Naive thymus-derived CD4-positive, alpha-beta T cell (primary cell): ENCODE measurements at regions of chr19 and their contacts with region 1.

Region 1: GRCh38 chr19:44653977-44654774 is 10.5 kb downstream of the PVR start:
- DNase-seq: peak; percentile 39 to 72 (median 58)
- ATAC-seq: peak; percentile 98
- H3K4me3 ChIP-seq: no peak overlapping the region
- H3K4me3 Mint-ChIP-seq: no peak overlapping the region
- H3K27ac ChIP-seq: no peak overlapping the region
- H3K27ac Mint-ChIP-seq: peak overlapping the region in 1 of 9 donors; percentile 27
- H3K4me1 ChIP-seq: peaks cover 0 to 4% of the 10 kb centered on the region in 2 donors
- H3K4me1 Mint-ChIP-seq: peaks cover 6 to 13% (median 10%) of the 10 kb centered on the region in 7 donors
- H3K27me3 ChIP-seq: no peaks in the 10 kb centered on the region
- H3K27me3 Mint-ChIP-seq: no peaks in the 10 kb centered on the region

Region 2: GRCh38 chr19:44576843-44577565 is 77.2 kb before region 1 on chr19:
- CTCF ChIA-PET with region 1: interaction called, 13 read pairs
- POLR2A ChIA-PET with region 1: no interaction called
- intact Hi-C with region 1: loop called in 1 of 2 experiments (anchors 1 kb)
- DNase-seq: peak in 3 of 9 donors; percentile 9 to 11 (median 10)
- ATAC-seq: peak; percentile 44
- H3K4me3 ChIP-seq: no peak overlapping the region
- H3K4me3 Mint-ChIP-seq: no peak overlapping the region
- H3K27ac ChIP-seq: no peak overlapping the region
- H3K27ac Mint-ChIP-seq: no peak overlapping the region
- H3K4me1 ChIP-seq: no peaks in the 10 kb centered on the region
- H3K4me1 Mint-ChIP-seq: no peaks in the 10 kb centered on the region
- H3K27me3 ChIP-seq: no peaks in the 10 kb centered on the region
- H3K27me3 Mint-ChIP-seq: peaks cover 0 to 5% (median 0%) of the 10 kb centered on the region in 5 donors

Region 3: GRCh38 chr19:44607049-44607448 is 47.1 kb before region 1 on chr19:
- CTCF ChIA-PET with region 1: no interaction called
- POLR2A ChIA-PET with region 1: no interaction called
- intact Hi-C with region 1: loop called in 1 of 2 experiments (anchors 5 kb)
- DNase-seq: peak in 4 of 9 donors; percentile 4 to 23 (median 19)
- ATAC-seq: peak; percentile 56
- H3K4me3 ChIP-seq: no peak overlapping the region
- H3K4me3 Mint-ChIP-seq: peak overlapping the region in 9 of 10 donors; percentile 39 to 86 (median 75)
- H3K27ac ChIP-seq: no peak overlapping the region
- H3K27ac Mint-ChIP-seq: peak overlapping the region in 8 of 9 donors; percentile 4 to 85 (median 62)
- H3K4me1 ChIP-seq: peaks cover 0 to 10% of the 10 kb centered on the region in 2 donors
- H3K4me1 Mint-ChIP-seq: peaks cover 0 to 31% (median 22%) of the 10 kb centered on the region in 7 donors
- H3K27me3 ChIP-seq: no peaks in the 10 kb centered on the region
- H3K27me3 Mint-ChIP-seq: peaks cover 0 to 5% (median 0%) of the 10 kb centered on the region in 5 donors

Region 4: GRCh38 chr19:44689056-44689895 is 35.1 kb after region 1 on chr19:
- CTCF ChIA-PET with region 1: no interaction called
- POLR2A ChIA-PET with region 1: no interaction called
- intact Hi-C with region 1: loop called in 1 of 2 experiments (anchors 5 kb)
- DNase-seq: peak; percentile 42 to 79 (median 69)
- ATAC-seq: peak; percentile 63
- H3K4me3 ChIP-seq: no peak overlapping the region
- H3K4me3 Mint-ChIP-seq: peak overlapping the region in 1 of 10 donors; percentile 20
- H3K27ac ChIP-seq: no peak overlapping the region
- H3K27ac Mint-ChIP-seq: peak overlapping the region in 4 of 9 donors; percentile 45 to 74 (median 62)
- H3K4me1 ChIP-seq: peaks cover 0 to 21% of the 10 kb centered on the region in 2 donors
- H3K4me1 Mint-ChIP-seq: peaks cover 25 to 43% (median 32%) of the 10 kb centered on the region in 7 donors
- H3K27me3 ChIP-seq: no peaks in the 10 kb centered on the region
- H3K27me3 Mint-ChIP-seq: peaks cover 5 to 19% (median 9%) of the 10 kb centered on the region in 5 donors

Region 5: GRCh38 chr19:44770550-44771257 is 116.5 kb after region 1 on chr19:
- CTCF ChIA-PET with region 1: interaction called, 6 read pairs
- POLR2A ChIA-PET with region 1: no interaction called
- intact Hi-C with region 1: loop called (anchors 1 kb)
- DNase-seq: peak; percentile 88 to 96 (median 94)
- ATAC-seq: peak; percentile 100
- H3K4me3 ChIP-seq: no peak overlapping the region
- H3K4me3 Mint-ChIP-seq: peak overlapping the region; percentile 45 to 83 (median 72)
- H3K27ac ChIP-seq: no peak overlapping the region
- H3K27ac Mint-ChIP-seq: peak overlapping the region; percentile 69 to 95 (median 86)
- H3K4me1 ChIP-seq: peaks cover 5 to 9% of the 10 kb centered on the region in 2 donors
- H3K4me1 Mint-ChIP-seq: peaks cover 0 to 37% (median 24%) of the 10 kb centered on the region in 7 donors
- H3K27me3 ChIP-seq: no peaks in the 10 kb centered on the region
- H3K27me3 Mint-ChIP-seq: peaks cover 0 to 3% (median 0%) of the 10 kb centered on the region in 5 donors